ENCODE measurements at regions of chr20 and their contacts with region 1.

Region 1: GRCh38 chr20:22575087-22575721 is 9.2 kb downstream of the FOXA2 start:
- DNase-seq: no peak
- H3K4me3 Mint-ChIP-seq: no peak overlapping the region
- H3K27ac Mint-ChIP-seq: no peak overlapping the region
- H3K4me1 Mint-ChIP-seq: peaks cover 5% of the 10 kb centered on the region
- H3K27me3 Mint-ChIP-seq: peaks cover 72% of the 10 kb centered on the region

Region 2: DNA sequence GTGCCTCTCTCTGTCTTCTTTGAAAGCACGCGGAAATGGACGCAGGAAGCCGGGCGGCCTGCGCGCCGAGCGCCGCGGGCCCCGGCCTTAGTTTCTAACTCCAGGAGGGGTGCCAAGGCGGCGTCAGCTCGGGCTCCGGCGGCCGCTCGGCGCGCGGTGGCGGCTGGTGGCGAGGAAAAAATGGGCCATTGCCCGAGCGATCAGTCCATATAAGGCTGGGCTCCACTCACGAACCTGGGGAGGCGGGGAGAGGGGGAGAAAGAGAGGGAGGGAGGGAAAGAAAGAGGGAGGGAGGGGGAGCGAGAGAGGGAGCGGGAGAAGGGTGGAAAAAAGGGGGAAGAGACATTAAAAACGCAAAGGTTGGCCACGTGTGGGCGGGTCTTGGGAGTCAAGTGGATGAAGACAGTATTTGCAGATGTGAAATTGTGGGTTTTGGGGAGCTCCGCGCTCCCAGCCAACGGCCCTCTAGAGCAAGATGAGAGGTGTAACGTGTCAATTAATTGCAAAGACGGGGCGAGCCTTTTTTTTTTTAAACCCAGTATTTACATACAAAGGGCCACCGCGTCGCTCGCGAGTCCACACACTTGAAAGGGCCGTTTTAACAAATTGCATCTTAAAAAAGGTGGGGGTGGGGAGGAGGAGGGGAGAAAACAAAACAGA is 1061.2 kb before region 1 on chr20 and contains the start of gene NKX2-2:
- intact Hi-C with region 1: loop called (anchors 5 kb)
- DNase-seq: no peak
- H3K4me3 Mint-ChIP-seq: peak within 1 kb of the TSS; percentile 21
- H3K27ac Mint-ChIP-seq: no peak within 1 kb of the TSS
- H3K4me1 Mint-ChIP-seq: peaks cover 15% of the 10 kb centered on the region
- H3K27me3 Mint-ChIP-seq: peaks cover 73% of the 10 kb centered on the region
- total RNA-seq, gene NKX2-2: not detected in 2 replicates

Region 3: GRCh38 chr20:22775671-22776139 is 200.5 kb after region 1 on chr20:
- intact Hi-C with region 1: no loop called
- DNase-seq: no peak
- H3K4me3 Mint-ChIP-seq: no peak overlapping the region
- H3K27ac Mint-ChIP-seq: no peak overlapping the region
- H3K4me1 Mint-ChIP-seq: no peaks in the 10 kb centered on the region
- H3K27me3 Mint-ChIP-seq: no peaks in the 10 kb centered on the region